CD4-positive, alpha-beta memory T cell (primary cell): ENCODE measurements at regions of chr12 and their contacts with region 1.

Region 1: GRCh38 chr12:122104844-122105243 is 26.3 kb downstream of the MLXIP start:
- DNase-seq: peak in 1 of 5 donors; percentile 46
- H3K4me3 ChIP-seq: no peak overlapping the region
- H3K4me3 Mint-ChIP-seq: peak overlapping the region; percentile 41 to 82 (median 64)
- H3K27ac ChIP-seq: no peak overlapping the region
- H3K27ac Mint-ChIP-seq: peak overlapping the region; percentile 19 to 82 (median 68)
- H3K4me1 ChIP-seq: peaks cover 83% of the 10 kb centered on the region
- H3K4me1 Mint-ChIP-seq: peaks cover 42 to 94% (median 74%) of the 10 kb centered on the region in 4 donors
- H3K27me3 ChIP-seq: no peaks in the 10 kb centered on the region
- H3K27me3 Mint-ChIP-seq: no peaks in the 10 kb centered on the region

Region 2: DNA sequence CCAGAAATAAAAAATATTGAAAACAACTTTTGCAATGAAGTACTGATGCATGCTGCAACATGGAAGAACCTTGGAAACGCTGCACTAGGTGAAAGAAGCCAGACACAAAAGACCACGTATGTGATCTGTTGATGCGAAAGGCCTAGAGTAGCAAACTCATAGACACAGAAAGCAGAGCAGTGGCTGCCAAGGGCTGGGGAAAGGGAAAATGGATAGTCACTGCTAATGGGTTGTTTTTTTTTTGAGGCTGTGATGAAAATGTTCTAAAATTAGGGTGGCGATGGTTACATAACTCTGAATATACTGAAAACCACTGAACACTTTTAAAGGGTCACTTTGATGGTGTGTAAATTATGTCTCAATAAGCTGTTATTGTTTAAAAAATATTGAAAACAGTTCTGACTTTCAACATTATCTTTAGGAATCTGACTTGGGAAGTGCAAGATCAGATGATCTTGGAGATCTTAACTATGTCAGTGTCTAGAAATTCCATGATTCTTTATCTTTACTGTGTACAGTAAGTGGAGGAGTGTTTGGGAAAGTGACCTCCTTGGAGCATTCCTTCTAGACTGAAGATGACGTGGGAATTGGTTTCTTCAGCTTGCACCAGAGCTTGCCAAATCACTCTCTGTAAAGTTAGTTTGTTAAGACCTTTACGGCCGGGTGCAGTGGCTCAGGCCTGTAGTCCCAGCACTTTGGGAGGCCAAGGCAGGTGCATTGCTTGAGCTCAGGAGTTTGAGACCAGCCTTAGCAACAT is 13.9 kb before region 1 on chr12:
- CTCF ChIA-PET with region 1: interaction called, 7 read pairs
- POLR2A ChIA-PET with region 1: interaction called, 6 read pairs
- intact Hi-C with region 1: loop called (anchors 2 kb)
- DNase-seq: no peak
- H3K4me3 ChIP-seq: no peak overlapping the region
- H3K4me3 Mint-ChIP-seq: peak overlapping the region in 3 of 8 donors; percentile 14 to 57 (median 55)
- H3K27ac ChIP-seq: no peak overlapping the region
- H3K27ac Mint-ChIP-seq: peak overlapping the region in 6 of 7 donors; percentile 1 to 85 (median 80)
- H3K4me1 ChIP-seq: peaks cover 84% of the 10 kb centered on the region
- H3K4me1 Mint-ChIP-seq: peaks cover 27 to 45% (median 37%) of the 10 kb centered on the region in 4 donors
- H3K27me3 ChIP-seq: no peaks in the 10 kb centered on the region
- H3K27me3 Mint-ChIP-seq: no peaks in the 10 kb centered on the region